AG04450 (cell line): ENCODE measurements at regions of chr7 and their contacts with region 1.

Region 1: GRCh38 chr7:131057015-131057793 is 270.5 kb upstream of the MKLN1 start:
- DNase-seq: peak; percentile 81
- H3K4me3 ChIP-seq: no peak overlapping the region
- H3K27ac ChIP-seq: peak overlapping the region; percentile 80
- H3K27me3 ChIP-seq: no peaks in the 10 kb centered on the region
- CTCF ChIP-seq: no peak

Region 2: DNA sequence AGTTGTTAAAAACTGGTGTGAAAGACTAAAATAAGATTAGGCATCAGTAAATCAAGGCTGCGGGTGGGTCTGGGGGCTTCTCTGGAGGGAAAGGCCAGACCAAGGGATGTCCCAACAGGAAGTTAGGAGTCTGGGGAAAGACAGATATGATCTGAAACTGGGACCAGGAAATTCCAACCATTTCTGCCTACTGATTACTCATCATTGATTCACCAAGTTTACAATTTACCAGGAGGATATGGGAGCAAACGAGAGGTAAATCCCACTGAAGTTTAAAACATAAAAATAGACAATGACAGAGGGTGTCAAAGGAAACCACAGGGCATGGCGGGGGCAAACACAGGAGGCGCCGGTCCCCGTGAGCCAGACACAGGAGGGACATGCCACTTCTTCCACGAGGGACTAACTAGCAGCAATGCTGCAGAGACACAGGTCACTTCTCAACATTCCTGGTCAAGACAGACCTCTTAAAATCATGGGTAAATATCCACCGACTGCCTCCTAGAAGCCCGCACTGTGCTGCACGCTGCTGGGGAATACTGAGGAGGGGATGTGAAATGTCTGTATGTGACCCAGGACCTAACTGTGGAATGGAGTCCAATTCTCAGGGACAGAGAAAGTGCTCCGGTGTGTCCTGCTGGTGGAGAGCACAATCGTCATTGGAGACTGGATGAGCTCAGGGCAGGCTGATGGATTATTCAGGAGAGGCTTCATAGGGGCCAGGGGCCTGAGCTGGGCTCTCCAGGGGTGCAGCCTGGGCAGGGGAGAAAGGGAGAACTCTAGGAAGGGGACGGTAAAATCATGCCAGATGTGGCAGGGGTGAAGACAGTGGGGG is 169.8 kb before region 1 on chr7:
- CTCF ChIA-PET with region 1: no interaction called
- POLR2A ChIA-PET with region 1: interaction called, 13 read pairs
- DNase-seq: no peak
- H3K4me3 ChIP-seq: peak overlapping the region; percentile 18; the same call in 1 of the 2 replicates
- H3K27ac ChIP-seq: peak overlapping the region; percentile 93
- H3K27me3 ChIP-seq: no peaks in the 10 kb centered on the region
- CTCF ChIP-seq: no peak

Region 3: GRCh38 chr7:131431289-131431688 is 374.1 kb after region 1 on chr7:
- CTCF ChIA-PET with region 1: no interaction called
- POLR2A ChIA-PET with region 1: no interaction called
- DNase-seq: no peak
- H3K4me3 ChIP-seq: no peak overlapping the region
- H3K27ac ChIP-seq: no peak overlapping the region
- H3K27me3 ChIP-seq: no peaks in the 10 kb centered on the region
- CTCF ChIP-seq: no peak